K562 (cell line): ENCODE measurements at regions of chr3 and their contacts with region 1.

Region 1: GRCh38 chr3:87082796-87083440 is 92.0 kb upstream of the VGLL3 start:
- DNase-seq: peak in 2 of 4 experiments; percentile 16 to 48
- ATAC-seq: peak; percentile 84
- H3K4me3 ChIP-seq: no peak overlapping the region
- H3K27ac ChIP-seq: no peak overlapping the region
- H3K4me1 ChIP-seq: no peaks in the 10 kb centered on the region
- H3K27me3 ChIP-seq: no peaks in the 10 kb centered on the region
- CTCF ChIP-seq: peak; percentile 25 to 44 (median 35); a peak in 3 of 6 replicates
- EP300 ChIP-seq: no peak
- POLR2A ChIP-seq: no peak
- RAD21 ChIP-seq: peak; percentile 54 to 66

Region 2: DNA sequence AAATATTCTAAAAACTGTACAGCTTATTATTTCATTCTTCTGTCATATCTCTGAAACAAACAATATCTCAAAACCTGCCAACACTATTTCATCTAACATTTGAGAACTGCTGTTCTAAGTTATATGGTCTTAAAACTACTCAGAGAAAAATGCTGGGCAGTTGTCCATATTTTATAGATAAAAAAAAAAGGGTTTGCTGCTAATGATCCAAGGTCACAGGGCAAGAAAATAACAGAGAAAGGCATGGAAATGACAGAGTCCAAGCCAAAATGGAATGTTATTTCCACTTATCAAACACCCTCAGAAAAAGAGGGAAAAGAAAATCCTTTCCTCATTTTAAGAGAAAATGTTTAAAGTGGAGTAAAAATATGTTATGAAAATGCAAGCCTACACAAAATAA is 1811.0 kb before region 1 on chr3:
- CTCF ChIA-PET with region 1: no interaction called
- POLR2A ChIA-PET with region 1: no interaction called
- in situ Hi-C with region 1: no loop called
- intact Hi-C with region 1: no loop called
- DNase-seq: no peak
- ATAC-seq: no peak
- H3K4me3 ChIP-seq: no peak overlapping the region
- H3K27ac ChIP-seq: no peak overlapping the region
- H3K4me1 ChIP-seq: no peaks in the 10 kb centered on the region
- H3K27me3 ChIP-seq: no peaks in the 10 kb centered on the region
- CTCF ChIP-seq: no peak
- EP300 ChIP-seq: no peak
- POLR2A ChIP-seq: no peak
- RAD21 ChIP-seq: no peak

Region 3: DNA sequence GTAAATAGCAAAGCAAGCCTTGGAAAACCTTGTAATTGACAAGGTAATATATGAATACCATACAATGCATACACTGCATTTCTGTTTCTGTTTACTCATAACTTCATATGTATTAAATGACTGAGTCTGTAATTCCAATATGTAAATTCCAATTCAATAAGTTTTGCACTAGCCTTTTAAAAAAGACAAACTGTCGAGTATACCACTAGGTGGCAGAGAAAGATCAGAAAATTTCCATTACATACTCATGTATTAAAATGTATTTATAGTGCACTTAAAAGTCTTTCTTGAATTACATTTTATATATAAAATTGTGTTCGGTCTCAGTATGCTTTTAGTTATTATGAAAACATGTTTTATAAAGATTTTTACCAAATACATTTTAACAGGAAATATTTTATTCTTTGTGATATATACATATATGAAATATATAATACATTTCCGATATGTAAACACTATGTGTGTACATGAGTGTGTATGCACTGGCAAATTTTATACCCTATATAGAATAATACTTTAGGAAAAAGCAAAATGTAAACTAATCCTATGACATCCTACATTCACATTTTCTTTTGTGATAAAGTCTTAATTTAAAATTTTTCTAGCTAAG is 308.7 kb before region 1 on chr3:
- CTCF ChIA-PET with region 1: no interaction called
- POLR2A ChIA-PET with region 1: no interaction called
- in situ Hi-C with region 1: no loop called
- intact Hi-C with region 1: loop called (anchors 5 kb)
- DNase-seq: peak in 2 of 4 experiments; percentile 1 to 11
- ATAC-seq: no peak
- H3K4me3 ChIP-seq: no peak overlapping the region
- H3K27ac ChIP-seq: no peak overlapping the region
- H3K4me1 ChIP-seq: no peaks in the 10 kb centered on the region
- H3K27me3 ChIP-seq: no peaks in the 10 kb centered on the region
- CTCF ChIP-seq: peak in 1 of 3 experiments; percentile 40; a peak in 2 of 6 replicates
- EP300 ChIP-seq: no peak
- POLR2A ChIP-seq: no peak
- RAD21 ChIP-seq: peak; percentile 34 to 52

Region 4: GRCh38 chr3:86969500-86970189 is 113.3 kb before region 1 on chr3:
- CTCF ChIA-PET with region 1: interaction called, 9 read pairs
- POLR2A ChIA-PET with region 1: no interaction called
- in situ Hi-C with region 1: no loop called
- intact Hi-C with region 1: loop called (anchors 2 kb)
- DNase-seq: peak; percentile 35 to 64 (median 56)
- ATAC-seq: peak; percentile 76
- H3K4me3 ChIP-seq: no peak overlapping the region
- H3K27ac ChIP-seq: no peak overlapping the region
- H3K4me1 ChIP-seq: no peaks in the 10 kb centered on the region
- H3K27me3 ChIP-seq: no peaks in the 10 kb centered on the region
- CTCF ChIP-seq: peak; percentile 63 to 67 (median 65)
- EP300 ChIP-seq: no peak
- POLR2A ChIP-seq: no peak
- RAD21 ChIP-seq: peak; percentile 42 to 68